CD8-positive, alpha-beta T cell (primary cell): ENCODE measurements at regions of chr11 and their contacts with region 1.

Region 1: DNA sequence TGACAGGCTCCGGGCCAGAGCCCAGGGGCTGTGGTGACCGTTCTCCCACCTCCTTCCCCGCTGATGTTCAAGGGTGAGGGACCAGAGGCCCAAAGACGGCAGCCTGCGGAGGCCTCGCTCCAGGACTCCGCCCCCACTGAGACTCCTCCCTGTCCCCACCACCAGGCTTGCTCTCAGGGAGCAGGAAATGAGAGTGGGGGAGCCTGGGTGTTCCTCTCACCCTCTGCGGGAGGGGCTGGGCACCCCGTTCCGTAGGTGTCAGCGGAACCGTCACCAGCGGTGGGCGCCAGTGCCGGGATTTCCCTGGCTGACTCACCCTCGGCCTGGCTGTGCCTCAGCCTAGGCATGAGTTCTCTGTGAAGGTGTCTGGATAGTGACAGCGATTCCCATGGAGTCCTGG is 15.7 kb downstream of the DAGLA start:
- DNase-seq: peak; percentile 80 to 97 (median 90)
- ATAC-seq: peak; percentile 99
- H3K4me3 ChIP-seq: peak overlapping the region; percentile 21 to 52
- H3K4me3 Mint-ChIP-seq: peak overlapping the region; percentile 55
- H3K27ac ChIP-seq: peak overlapping the region in 1 of 2 experiments; percentile 14
- H3K27ac Mint-ChIP-seq: peak overlapping the region; percentile 79
- H3K4me1 ChIP-seq: peaks cover 36% of the 10 kb centered on the region
- H3K4me1 Mint-ChIP-seq: peaks cover 25% of the 10 kb centered on the region
- H3K27me3 ChIP-seq: no peaks in the 10 kb centered on the region
- H3K27me3 Mint-ChIP-seq: no peaks in the 10 kb centered on the region
- CTCF ChIP-seq: no peak

Region 2: DNA sequence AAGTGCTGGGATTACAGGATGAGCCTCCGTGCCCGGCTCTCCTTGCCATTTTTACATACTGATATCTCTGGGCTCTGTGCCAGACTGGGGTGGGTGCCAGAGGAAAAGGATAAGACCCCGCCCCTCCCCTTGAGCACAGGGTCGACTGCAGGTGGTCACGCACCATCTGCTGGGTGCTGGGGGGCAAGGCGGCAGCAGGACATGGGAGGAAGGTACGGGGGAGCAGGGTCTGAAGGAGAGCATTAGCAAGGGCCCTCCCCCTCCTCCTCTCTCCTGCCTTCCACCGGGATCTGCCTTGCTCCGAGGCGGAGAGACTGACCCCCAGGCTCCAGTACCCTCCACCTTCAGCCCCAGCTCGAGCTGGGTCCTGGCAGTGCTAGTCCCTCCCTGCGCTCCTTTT is 502.3 kb before region 1 on chr11:
- CTCF ChIA-PET with region 1: no interaction called
- POLR2A ChIA-PET with region 1: no interaction called
- intact Hi-C with region 1: no loop called
- DNase-seq: no peak
- ATAC-seq: no peak
- H3K4me3 ChIP-seq: no peak overlapping the region
- H3K4me3 Mint-ChIP-seq: no peak overlapping the region
- H3K27ac ChIP-seq: no peak overlapping the region
- H3K27ac Mint-ChIP-seq: no peak overlapping the region
- H3K4me1 ChIP-seq: no peaks in the 10 kb centered on the region
- H3K4me1 Mint-ChIP-seq: no peaks in the 10 kb centered on the region
- H3K27me3 ChIP-seq: peaks cover 0 to 3% of the 10 kb centered on the region in 2 experiments
- H3K27me3 Mint-ChIP-seq: peaks cover 9% of the 10 kb centered on the region
- CTCF ChIP-seq: no peak

Region 3: DNA sequence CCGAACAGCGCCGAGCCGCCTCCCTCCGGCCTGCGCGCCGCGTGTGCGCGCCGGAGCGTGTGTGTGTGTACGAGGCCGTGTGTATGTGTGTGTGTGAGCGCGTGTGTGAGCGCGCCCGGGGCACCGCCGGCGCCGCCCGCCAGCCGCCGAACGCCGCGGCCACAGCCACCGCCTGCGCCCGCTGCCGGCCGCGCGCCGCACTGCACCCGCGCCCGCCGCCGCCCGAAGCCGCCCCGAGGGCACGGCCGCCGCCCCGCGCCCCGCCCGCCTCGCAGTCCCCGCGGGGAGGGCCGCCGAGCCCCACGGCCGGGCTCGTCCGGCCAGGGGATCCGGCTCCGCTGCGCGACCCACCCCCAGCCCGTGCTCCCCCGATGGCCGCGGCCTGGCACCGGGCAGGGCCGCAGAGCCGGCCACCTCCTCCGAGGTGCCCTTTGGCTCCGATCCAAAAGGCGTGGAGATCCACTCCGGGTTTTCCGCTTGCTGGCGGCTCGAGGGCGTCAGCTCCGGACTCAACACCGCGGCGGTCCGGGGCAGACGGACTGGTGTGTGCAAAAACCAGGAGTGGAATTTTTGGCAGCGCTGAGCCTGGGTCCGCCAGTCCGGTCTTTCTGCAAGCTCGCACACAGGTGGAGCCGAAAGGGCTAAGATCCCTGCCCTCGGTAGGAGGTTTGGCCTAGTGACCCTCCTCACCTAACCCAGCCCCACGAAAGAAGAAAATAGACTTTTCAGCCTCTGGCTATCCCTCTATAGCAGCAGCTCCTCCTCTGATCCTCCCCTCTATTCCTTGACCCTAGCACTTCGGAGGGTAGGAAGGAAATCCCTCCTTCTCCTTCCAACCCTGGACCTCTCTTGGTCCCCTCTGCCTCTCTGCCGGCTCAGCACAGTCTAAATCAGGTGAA is 114.6 kb before region 1 on chr11 and contains the start of gene SYT7:
- CTCF ChIA-PET with region 1: no interaction called
- POLR2A ChIA-PET with region 1: no interaction called
- intact Hi-C with region 1: loop called in 1 of 2 experiments (anchors 5 kb)
- DNase-seq: peak; percentile 87 to 97 (median 93)
- ATAC-seq: peak; percentile 87
- H3K4me3 ChIP-seq: peak within 1 kb of the TSS; percentile 22 to 38
- H3K4me3 Mint-ChIP-seq: peak within 1 kb of the TSS; percentile 86
- H3K27ac ChIP-seq: no peak within 1 kb of the TSS
- H3K27ac Mint-ChIP-seq: peak within 1 kb of the TSS; percentile 33
- H3K4me1 ChIP-seq: peaks cover 14% of the 10 kb centered on the region
- H3K4me1 Mint-ChIP-seq: peaks cover 14% of the 10 kb centered on the region
- H3K27me3 ChIP-seq: peaks cover 13 to 20% of the 10 kb centered on the region in 2 experiments
- H3K27me3 Mint-ChIP-seq: peaks cover 36% of the 10 kb centered on the region
- CTCF ChIP-seq: no peak
- total RNA-seq, gene SYT7: not detected

Region 4: DNA sequence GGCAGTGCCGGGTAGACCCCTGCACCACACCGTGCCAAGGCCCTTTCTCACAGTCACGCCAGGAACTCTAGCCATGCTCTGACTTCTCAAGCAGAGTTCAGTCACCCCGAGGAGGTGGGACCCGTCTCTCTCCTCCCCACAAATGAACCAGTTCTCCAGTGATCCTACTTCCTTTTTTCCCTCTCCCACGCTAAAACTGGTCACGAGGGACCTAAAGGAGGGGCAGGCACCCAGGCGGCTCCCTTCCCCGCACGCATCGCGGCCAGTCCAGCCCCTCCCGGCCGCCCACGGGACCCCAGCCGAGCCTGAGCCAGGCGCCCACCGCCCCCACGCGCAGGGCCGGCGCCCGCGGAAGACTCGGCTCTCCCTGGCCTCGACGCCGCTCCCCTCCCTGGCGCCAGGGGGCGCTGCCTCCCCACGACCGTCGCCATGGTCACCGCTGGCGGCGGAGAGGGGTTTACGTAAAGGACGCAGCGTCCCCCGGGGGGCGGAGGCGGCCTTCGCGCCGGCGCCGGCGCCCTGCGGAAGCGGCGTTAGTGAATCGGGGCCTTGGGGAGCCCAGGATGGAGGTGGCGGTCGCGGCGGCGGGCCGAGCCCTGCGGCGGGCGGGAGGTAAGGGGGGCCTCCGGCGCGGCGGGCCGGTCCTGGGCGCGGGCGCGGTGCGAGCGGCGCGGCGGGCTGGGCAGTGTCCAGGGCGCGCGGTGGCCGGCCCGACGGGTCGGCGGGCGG is 15.9 kb before region 1 on chr11 and contains the start of gene DAGLA:
- CTCF ChIA-PET with region 1: interaction called, 4 read pairs
- POLR2A ChIA-PET with region 1: interaction called, 3 read pairs
- intact Hi-C with region 1: loop called (anchors 1 kb)
- DNase-seq: peak; percentile 60 to 91 (median 81)
- ATAC-seq: peak; percentile 89
- H3K4me3 ChIP-seq: peak within 1 kb of the TSS in 1 of 2 experiments; percentile 27
- H3K4me3 Mint-ChIP-seq: peak within 1 kb of the TSS; percentile 75
- H3K27ac ChIP-seq: no peak within 1 kb of the TSS
- H3K27ac Mint-ChIP-seq: no peak within 1 kb of the TSS
- H3K4me1 ChIP-seq: peaks cover 22% of the 10 kb centered on the region
- H3K4me1 Mint-ChIP-seq: peaks cover 8% of the 10 kb centered on the region
- H3K27me3 ChIP-seq: peaks cover 0 to 8% of the 10 kb centered on the region in 2 experiments
- H3K27me3 Mint-ChIP-seq: peaks cover 21% of the 10 kb centered on the region
- CTCF ChIP-seq: peak; percentile 80
- total RNA-seq, gene DAGLA: 0.06 to 0.08 TPM